Breast epithelium (tissue), 4 donors: ENCODE measurements at regions of chr2 and their contacts with region 1.

Region 1: GRCh38 chr2:200811336-200812121 is at the start of gene BZW1:
- DNase-seq: peak; percentile 92 to 97
- H3K4me3 ChIP-seq: peak within 1 kb of the TSS; percentile 97 to 100 (median 98)
- H3K27ac ChIP-seq: peak within 1 kb of the TSS; percentile 94 to 98
- H3K4me1 ChIP-seq: peaks cover 0 to 12% of the 10 kb centered on the region in 2 donors
- H3K27me3 ChIP-seq: no peaks in the 10 kb centered on the region
- CTCF ChIP-seq: no peak
- POLR2A ChIP-seq: peak; percentile 83
- total RNA-seq, gene BZW1: 309 to 422 (median 326) TPM

Region 2: GRCh38 chr2:200713003-200713703 is 98.4 kb before region 1 on chr2:
- intact Hi-C with region 1: loop called (anchors 5 kb)
- DNase-seq: peak; percentile 71 to 81
- H3K4me3 ChIP-seq: peak overlapping the region; percentile 27 to 63 (median 49)
- H3K27ac ChIP-seq: peak overlapping the region; percentile 49 to 81
- H3K4me1 ChIP-seq: no peaks in the 10 kb centered on the region
- H3K27me3 ChIP-seq: no peaks in the 10 kb centered on the region
- CTCF ChIP-seq: peak; percentile 62 to 89 (median 75)
- POLR2A ChIP-seq: no peak

Region 3: DNA sequence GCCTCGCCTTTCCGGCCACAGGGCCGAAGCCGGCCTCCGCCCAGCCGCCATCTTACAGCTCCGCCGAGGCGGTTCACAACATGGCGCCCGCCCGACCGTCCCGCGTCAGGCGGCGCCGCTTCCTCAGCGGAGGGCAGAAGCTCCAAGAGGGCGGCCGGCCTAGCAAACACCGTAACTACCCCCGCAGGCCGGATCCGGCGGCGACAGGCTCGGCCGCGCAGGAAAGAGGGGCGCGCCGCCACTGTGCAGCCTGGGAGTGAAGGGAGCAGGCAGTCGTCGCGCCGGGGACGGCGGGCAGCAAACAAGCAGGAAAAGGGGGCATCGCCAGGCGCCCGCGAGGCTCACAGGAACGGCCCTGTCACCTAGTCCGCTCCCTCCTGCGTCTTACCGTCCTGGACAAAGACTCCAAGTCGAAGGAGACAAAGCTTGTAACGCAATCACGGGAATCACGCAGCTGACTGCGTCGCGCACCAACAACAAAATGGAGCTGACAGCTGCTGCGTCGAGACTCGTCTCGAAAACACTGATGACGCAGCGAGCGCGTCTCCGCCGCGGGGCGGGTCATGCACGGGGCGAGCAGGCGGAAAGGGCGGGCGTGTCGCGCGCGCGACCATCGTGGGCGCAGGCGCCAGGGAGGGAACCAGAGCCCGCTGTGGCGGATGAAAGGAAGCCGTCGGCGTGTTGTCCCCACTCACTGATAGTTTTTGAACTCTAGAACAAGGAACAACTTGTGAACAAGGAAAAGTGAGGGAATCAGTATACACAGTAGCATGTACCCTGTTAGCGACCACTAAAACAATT is 52.8 kb after region 1 on chr2 and contains the start of gene CLK1:
- intact Hi-C with region 1: loop called (anchors 10 kb)
- DNase-seq: peak; percentile 95 to 97
- H3K4me3 ChIP-seq: peak within 1 kb of the TSS; percentile 90 to 99 (median 95)
- H3K27ac ChIP-seq: peak within 1 kb of the TSS; percentile 100
- H3K4me1 ChIP-seq: peaks cover under 1 to 3% of the 10 kb centered on the region in 2 donors
- H3K27me3 ChIP-seq: no peaks in the 10 kb centered on the region
- CTCF ChIP-seq: no peak
- POLR2A ChIP-seq: peak; percentile 98
- total RNA-seq, gene CLK1: 124 to 350 (median 237) TPM

Region 4: DNA sequence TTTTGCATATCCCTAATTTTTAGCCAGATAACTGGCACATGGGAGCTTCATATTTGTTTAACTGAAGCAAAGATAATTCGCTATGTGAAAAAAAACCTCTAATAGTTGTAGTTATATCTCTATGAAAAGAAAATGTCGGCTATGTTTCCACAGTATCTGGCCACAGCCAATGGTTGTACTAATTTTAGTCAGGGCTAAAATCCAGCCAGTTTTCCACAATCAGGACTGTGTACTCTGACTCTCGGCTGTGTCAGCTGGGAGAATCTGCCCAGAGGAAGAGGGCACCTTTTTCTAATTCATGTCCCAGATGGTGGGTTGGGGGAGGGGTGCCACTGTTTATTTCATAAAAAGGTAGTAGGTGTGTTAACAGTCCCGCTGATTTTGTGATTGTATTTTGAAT is 678.8 kb after region 1 on chr2:
- intact Hi-C with region 1: no loop called
- DNase-seq: no peak
- H3K4me3 ChIP-seq: no peak overlapping the region
- H3K27ac ChIP-seq: no peak overlapping the region
- H3K4me1 ChIP-seq: no peaks in the 10 kb centered on the region
- H3K27me3 ChIP-seq: no peaks in the 10 kb centered on the region
- CTCF ChIP-seq: no peak
- POLR2A ChIP-seq: no peak